ENCODE measurements at regions of chr19 and their contacts with region 1.

Region 1: GRCh38 chr19:7943444-7944176 is at the start of gene TIMM44:
- DNase-seq: peak; percentile 99
- ATAC-seq: peak; percentile 99
- H3K4me3 Mint-ChIP-seq: peak within 1 kb of the TSS; percentile 90
- H3K27ac Mint-ChIP-seq: peak within 1 kb of the TSS; percentile 90
- H3K4me1 Mint-ChIP-seq: peaks cover 30% of the 10 kb centered on the region
- H3K27me3 Mint-ChIP-seq: no peaks in the 10 kb centered on the region
- total RNA-seq, gene TIMM44: 80.4 to 84.0 TPM

Region 2: GRCh38 chr19:7629347-7630054 is 314.1 kb before region 1 on chr19 and contains the starts of genes PET100 and XAB2:
- CTCF ChIA-PET with region 1: no interaction called
- POLR2A ChIA-PET with region 1: interaction called, 4 read pairs
- intact Hi-C with region 1: loop called in 1 of 2 experiments (anchors 1 kb)
- DNase-seq: peak; percentile 97
- ATAC-seq: peak; percentile 99
- H3K4me3 Mint-ChIP-seq: peak within 1 kb of the TSS; percentile 88
- H3K27ac Mint-ChIP-seq: peak within 1 kb of the TSS; percentile 97
- H3K4me1 Mint-ChIP-seq: peaks cover 32% of the 10 kb centered on the region
- H3K27me3 Mint-ChIP-seq: no peaks in the 10 kb centered on the region
- total RNA-seq, gene PET100: 45.1 to 99.4 TPM
- total RNA-seq, gene XAB2: 45.9 to 48.3 TPM

Region 3: GRCh38 chr19:7910321-7911161 is 33.1 kb before region 1 on chr19:
- CTCF ChIA-PET with region 1: no interaction called
- POLR2A ChIA-PET with region 1: no interaction called
- intact Hi-C with region 1: no loop called
- DNase-seq: no peak
- ATAC-seq: no peak
- H3K4me3 Mint-ChIP-seq: no peak overlapping the region
- H3K27ac Mint-ChIP-seq: no peak overlapping the region
- H3K4me1 Mint-ChIP-seq: peaks cover 10% of the 10 kb centered on the region
- H3K27me3 Mint-ChIP-seq: peaks cover 7% of the 10 kb centered on the region

Region 4: GRCh38 chr19:7925171-7925851 is 18.3 kb before region 1 on chr19:
- CTCF ChIA-PET with region 1: interaction called, 24 read pairs
- POLR2A ChIA-PET with region 1: interaction called, 10 read pairs
- intact Hi-C with region 1: loop called (anchors 1 kb)
- DNase-seq: peak; percentile 90
- ATAC-seq: peak; percentile 50
- H3K4me3 Mint-ChIP-seq: peak overlapping the region; percentile 67
- H3K27ac Mint-ChIP-seq: no peak overlapping the region
- H3K4me1 Mint-ChIP-seq: peaks cover 28% of the 10 kb centered on the region
- H3K27me3 Mint-ChIP-seq: peaks cover 1% of the 10 kb centered on the region

Region 5: DNA sequence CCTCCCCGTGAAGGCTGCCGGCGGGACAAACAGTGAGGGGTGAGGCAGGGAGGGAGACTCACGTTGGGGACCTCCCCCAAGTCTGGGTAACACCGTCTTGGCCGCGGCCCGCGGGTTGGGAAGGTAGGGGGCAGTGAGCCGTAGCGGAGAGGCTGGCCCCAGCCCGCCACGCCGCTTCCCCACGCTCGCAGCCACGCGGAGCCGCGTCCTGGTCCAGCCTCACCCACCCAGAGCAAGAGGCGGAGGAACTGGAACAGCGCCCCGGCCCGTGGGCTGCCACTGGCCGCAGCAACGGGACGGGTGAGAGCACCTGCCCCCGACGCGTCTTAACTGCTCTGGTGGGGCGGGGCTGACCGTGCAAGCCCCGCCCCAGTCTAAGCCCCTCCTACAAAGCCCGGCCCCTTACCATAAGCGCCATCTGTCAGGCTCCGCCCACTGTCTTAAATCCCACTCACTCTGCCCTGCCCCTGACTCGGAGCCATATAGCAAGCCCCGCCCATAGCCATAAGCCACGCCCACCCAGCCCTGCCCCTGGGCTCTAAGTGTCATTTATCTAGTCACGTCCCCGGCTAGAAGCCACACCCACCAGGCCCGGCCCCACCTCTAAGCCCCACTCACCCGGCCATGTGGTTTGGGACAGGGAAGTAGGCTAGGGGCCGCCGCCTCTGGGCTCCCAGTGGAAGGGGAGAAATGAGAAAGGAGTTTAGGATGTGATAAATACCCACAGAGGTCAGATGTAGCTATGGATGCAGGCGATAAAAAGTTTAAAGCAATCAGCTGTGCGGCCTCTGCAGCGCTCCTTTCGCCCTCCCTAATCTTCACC is 106.9 kb after region 1 on chr19:
- CTCF ChIA-PET with region 1: interaction called, 7 read pairs
- POLR2A ChIA-PET with region 1: no interaction called
- intact Hi-C with region 1: loop called in 1 of 2 experiments (anchors 1 kb)
- DNase-seq: peak; percentile 98
- ATAC-seq: peak; percentile 99
- H3K4me3 Mint-ChIP-seq: peak overlapping the region; percentile 36
- H3K27ac Mint-ChIP-seq: no peak overlapping the region
- H3K4me1 Mint-ChIP-seq: peaks cover 11% of the 10 kb centered on the region
- H3K27me3 Mint-ChIP-seq: peaks cover 4% of the 10 kb centered on the region

Region 6: GRCh38 chr19:8208922-8209461 is 265.4 kb after region 1 on chr19 and contains the start of gene CERS4:
- CTCF ChIA-PET with region 1: no interaction called
- POLR2A ChIA-PET with region 1: interaction called, 3 read pairs
- intact Hi-C with region 1: loop called in 1 of 2 experiments (anchors 1 kb)
- DNase-seq: peak; percentile 89
- ATAC-seq: peak; percentile 83
- H3K4me3 Mint-ChIP-seq: peak within 1 kb of the TSS; percentile 83
- H3K27ac Mint-ChIP-seq: peak within 1 kb of the TSS; percentile 94
- H3K4me1 Mint-ChIP-seq: peaks cover 24% of the 10 kb centered on the region
- H3K27me3 Mint-ChIP-seq: no peaks in the 10 kb centered on the region
- total RNA-seq, gene CERS4: 21.2 to 21.8 TPM

Measured in activated CD4-positive, alpha-beta T cell treated with anti-CD3 and anti-CD28 coated beads for 36 hours (primary cell).